ENCODE measurements at regions of chr2 and their contacts with region 1.

Region 1: GRCh38 chr2:234304945-234305344 is 191.9 kb downstream of the ARL4C start:
- DNase-seq: no peak
- H3K4me3 ChIP-seq: no peak overlapping the region
- CTCF ChIP-seq: no peak

Region 2: GRCh38 chr2:234288974-234289455 is 15.9 kb before region 1 on chr2:
- CTCF ChIA-PET with region 1: interaction called, 17 read pairs
- POLR2A ChIA-PET with region 1: no interaction called
- DNase-seq: no peak
- H3K4me3 ChIP-seq: no peak overlapping the region
- CTCF ChIP-seq: peak; percentile 74